IMR-90 (cell line): ENCODE measurements at regions of chr16 and their contacts with region 1.

Region 1: DNA sequence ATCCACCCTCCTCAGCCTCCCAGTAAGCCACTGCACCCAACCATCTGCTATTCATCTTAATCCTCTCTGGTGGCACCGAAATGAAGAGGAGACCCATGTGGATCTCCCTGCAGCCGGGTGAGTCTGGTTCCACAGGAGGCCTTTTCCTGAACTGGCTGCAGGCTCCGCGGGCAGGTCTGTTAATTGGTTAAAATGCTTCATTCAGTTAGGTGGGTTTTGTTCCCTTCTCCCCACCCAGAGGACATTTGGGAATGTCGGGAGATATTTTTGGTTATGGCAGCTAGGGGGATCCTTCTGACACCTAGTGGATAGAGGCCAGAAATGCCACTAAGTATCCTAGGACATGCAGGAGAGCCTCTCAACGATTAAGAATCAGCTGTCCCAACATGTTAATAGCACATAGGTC is 16.7 kb downstream of the C16orf54 start:
- DNase-seq: peak; percentile 49
- ATAC-seq: peak; percentile 86
- H3K4me3 ChIP-seq: no peak overlapping the region
- H3K27ac ChIP-seq: no peak overlapping the region
- H3K4me1 ChIP-seq: no peaks in the 10 kb centered on the region
- H3K27me3 ChIP-seq: peaks cover 11% of the 10 kb centered on the region
- CTCF ChIP-seq: peak; percentile 69
- POLR2A ChIP-seq: no peak
- RAD21 ChIP-seq: peak; percentile 57

Region 2: DNA sequence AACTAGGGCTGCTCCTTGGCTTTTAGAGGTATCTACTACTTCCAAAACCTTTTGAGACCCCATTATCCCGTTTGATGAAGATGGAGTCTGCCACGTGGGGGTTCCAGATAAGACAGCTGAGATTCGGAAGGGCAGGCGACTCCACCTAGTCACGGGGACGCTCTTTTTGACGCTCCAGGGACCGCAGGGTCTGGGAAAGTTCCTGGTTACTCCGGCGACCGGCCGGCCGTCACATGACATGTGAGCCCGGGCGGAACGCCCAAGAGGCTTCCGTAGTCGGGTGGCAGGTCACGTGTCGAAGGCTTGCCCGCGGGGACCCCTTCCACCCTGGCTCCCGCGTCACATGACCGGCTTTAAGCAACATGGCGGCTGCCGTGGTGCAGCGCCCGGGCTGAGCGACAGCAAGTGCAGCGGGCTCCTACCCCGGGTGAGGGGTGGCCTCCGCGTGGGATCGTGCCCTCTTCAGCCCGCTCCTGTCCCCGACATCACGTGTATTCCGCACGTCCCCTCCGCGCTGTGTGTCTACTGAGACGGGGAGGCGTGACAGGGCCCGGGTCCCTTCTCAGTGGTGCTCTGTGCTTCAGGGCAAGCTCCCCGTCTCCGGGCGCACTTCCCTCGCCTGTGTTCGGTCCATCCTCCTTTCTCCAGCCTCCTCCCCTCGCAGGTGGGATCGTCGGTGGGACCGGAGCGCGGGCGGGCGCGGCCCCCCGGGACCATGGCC is 754.5 kb before region 1 on chr16 and contains the start of gene SPNS1:
- CTCF ChIA-PET with region 1: no interaction called
- POLR2A ChIA-PET with region 1: no interaction called
- dilution Hi-C with region 1: no loop called
- in situ Hi-C with region 1: no loop called
- intact Hi-C with region 1: loop called (anchors 10 kb)
- DNase-seq: peak; percentile 97
- ATAC-seq: peak; percentile 88
- H3K4me3 ChIP-seq: peak within 1 kb of the TSS; percentile 75
- H3K27ac ChIP-seq: peak within 1 kb of the TSS; percentile 76
- H3K4me1 ChIP-seq: no peaks in the 10 kb centered on the region
- H3K27me3 ChIP-seq: no peaks in the 10 kb centered on the region
- CTCF ChIP-seq: no peak
- POLR2A ChIP-seq: peak; percentile 82; the same call in 1 of the 2 replicates
- RAD21 ChIP-seq: no peak; the same call in 1 of the 2 replicates
- total RNA-seq, gene SPNS1: 4.7 and 6.9 TPM in 2 replicates

Region 3: DNA sequence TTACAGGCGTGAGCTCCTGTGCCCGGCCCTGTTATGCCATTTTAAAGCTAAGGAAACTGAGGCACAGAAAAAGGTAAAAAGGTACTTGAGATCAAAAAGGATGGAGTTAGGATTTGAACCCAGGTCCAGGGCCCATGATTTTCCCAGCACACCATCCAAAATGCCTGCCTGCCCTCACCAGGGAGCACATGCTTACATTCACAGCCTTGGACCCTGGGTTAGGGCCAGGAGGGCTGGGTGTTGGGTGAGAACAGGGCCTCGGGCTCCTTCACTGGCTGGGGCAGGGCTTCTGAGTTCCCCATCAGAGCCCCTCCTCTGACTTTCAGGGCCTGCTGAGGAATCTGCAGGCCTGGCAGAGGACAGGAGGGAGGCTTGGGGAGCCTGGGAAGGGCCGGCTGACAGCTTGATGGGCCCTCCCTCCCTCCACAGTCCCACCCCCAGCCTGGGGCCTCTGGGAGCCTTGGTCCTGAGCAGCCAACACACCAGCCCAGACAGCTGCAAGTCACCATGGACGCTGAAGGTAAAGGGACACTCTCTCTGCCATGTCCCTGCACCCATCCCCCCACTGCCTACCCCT is 50.3 kb before region 1 on chr16 and contains the start of gene QPRT:
- CTCF ChIA-PET with region 1: no interaction called
- POLR2A ChIA-PET with region 1: no interaction called
- dilution Hi-C with region 1: no loop called
- in situ Hi-C with region 1: no loop called
- intact Hi-C with region 1: no loop called
- DNase-seq: peak; percentile 22
- ATAC-seq: peak; percentile 88
- H3K4me3 ChIP-seq: peak within 1 kb of the TSS; percentile 30
- H3K27ac ChIP-seq: peak within 1 kb of the TSS; percentile 56; the same call in 1 of the 2 replicates
- H3K4me1 ChIP-seq: peaks cover 10% of the 10 kb centered on the region; the same call in 1 of the 2 replicates
- H3K27me3 ChIP-seq: no peaks in the 10 kb centered on the region
- CTCF ChIP-seq: no peak
- POLR2A ChIP-seq: no peak
- RAD21 ChIP-seq: no peak
- total RNA-seq, gene QPRT: 3.4 and 3.6 TPM in 2 replicates